Activated CD4-positive, alpha-beta T cell treated with anti-CD3 and anti-CD28 coated beads for 36 hours (primary cell): ENCODE measurements at regions of chr1 and their contacts with region 1.

Region 1: DNA sequence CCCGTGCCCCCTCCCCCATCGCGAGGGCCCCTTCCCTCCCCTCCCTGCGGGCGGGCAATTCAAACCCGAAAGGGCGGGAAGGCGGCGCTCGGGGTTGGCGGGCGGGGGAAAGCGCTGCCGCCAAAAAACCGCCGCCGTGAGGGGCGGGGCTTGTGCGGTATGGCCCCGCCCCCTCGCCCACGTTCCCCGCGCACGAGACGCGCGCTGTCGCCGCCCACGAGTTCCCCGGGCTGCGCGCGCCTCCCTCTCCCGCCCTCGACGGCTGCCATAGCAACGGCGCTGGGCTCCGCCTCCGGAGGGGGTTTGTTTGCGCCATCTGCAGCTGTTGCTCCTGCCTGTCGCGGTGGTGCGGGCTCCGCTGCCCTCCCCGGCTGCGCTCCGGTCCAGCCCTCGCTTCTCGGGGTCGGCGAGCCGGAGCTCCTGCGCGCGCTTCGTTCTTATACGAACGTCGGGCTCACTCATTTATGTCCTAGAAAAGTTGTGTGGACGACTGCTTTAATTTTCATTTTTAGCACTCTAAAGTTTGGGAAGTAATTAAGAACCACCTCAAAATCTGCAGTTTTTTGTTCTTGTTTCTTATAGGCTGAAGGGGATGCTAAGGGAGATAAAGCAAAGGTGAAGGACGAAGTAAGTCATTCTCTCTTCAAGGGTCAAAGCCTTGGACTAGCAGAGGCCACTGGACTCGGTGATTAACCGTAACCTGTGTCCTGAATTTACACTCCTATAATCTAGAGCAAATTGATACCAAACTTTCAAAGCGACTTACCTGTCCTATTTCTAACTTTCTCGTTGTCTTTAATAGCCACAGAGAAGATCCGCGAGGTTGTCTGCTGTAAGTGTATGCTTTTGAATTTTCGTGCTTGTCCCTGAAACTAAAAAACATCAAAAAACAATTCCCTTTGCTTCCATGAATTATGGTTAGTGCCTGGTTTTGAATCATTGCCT is 933 bp downstream of the HMGN2 start:
- DNase-seq: peak; percentile 97
- ATAC-seq: peak; percentile 62
- H3K4me3 Mint-ChIP-seq: peak overlapping the region; percentile 91
- H3K27ac Mint-ChIP-seq: peak overlapping the region; percentile 43
- H3K4me1 Mint-ChIP-seq: peaks cover 50% of the 10 kb centered on the region
- H3K27me3 Mint-ChIP-seq: no peaks in the 10 kb centered on the region

Region 2: GRCh38 chr1:26279456-26280332 is 193.5 kb before region 1 on chr1 and contains the start of gene SH3BGRL3:
- CTCF ChIA-PET with region 1: no interaction called
- POLR2A ChIA-PET with region 1: no interaction called
- intact Hi-C with region 1: loop called in 1 of 2 experiments (anchors 2 kb)
- DNase-seq: peak; percentile 92
- ATAC-seq: peak; percentile 56
- H3K4me3 Mint-ChIP-seq: peak within 1 kb of the TSS; percentile 78
- H3K27ac Mint-ChIP-seq: peak within 1 kb of the TSS; percentile 94
- H3K4me1 Mint-ChIP-seq: peaks cover 82% of the 10 kb centered on the region
- H3K27me3 Mint-ChIP-seq: no peaks in the 10 kb centered on the region
- total RNA-seq, gene SH3BGRL3: 267 to 381 TPM

Region 3: GRCh38 chr1:26408604-26409003 is 64.6 kb before region 1 on chr1:
- CTCF ChIA-PET with region 1: no interaction called
- POLR2A ChIA-PET with region 1: no interaction called
- intact Hi-C with region 1: no loop called
- DNase-seq: peak; percentile 85
- ATAC-seq: peak; percentile 87
- H3K4me3 Mint-ChIP-seq: no peak overlapping the region
- H3K27ac Mint-ChIP-seq: no peak overlapping the region
- H3K4me1 Mint-ChIP-seq: peaks cover 20% of the 10 kb centered on the region
- H3K27me3 Mint-ChIP-seq: peaks cover 39% of the 10 kb centered on the region

Region 4: DNA sequence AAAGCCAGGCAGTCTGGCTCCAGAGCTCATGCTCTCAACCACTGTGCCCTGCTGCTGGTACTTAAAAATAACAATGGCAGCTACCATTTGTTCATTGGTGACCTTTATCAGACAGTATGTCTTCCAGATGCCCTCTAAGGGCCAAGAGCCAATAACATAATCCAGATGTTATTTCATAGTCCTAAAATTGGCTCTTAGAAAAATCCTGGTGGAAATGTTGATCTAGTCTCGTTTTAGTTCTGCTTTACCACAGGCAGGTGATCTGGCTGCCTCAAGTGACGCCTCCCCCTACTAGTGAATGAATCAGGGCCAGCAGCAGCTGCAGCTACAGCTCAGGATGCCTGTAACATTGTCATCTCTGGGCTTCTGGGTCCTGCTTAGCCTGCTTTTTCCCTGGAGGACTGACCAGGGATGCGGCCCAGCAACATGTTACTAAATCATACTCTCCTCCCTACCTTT is 13.6 kb before region 1 on chr1:
- CTCF ChIA-PET with region 1: interaction called, 13 read pairs
- POLR2A ChIA-PET with region 1: no interaction called
- intact Hi-C with region 1: no loop called
- DNase-seq: no peak
- ATAC-seq: no peak
- H3K4me3 Mint-ChIP-seq: no peak overlapping the region
- H3K27ac Mint-ChIP-seq: no peak overlapping the region
- H3K4me1 Mint-ChIP-seq: no peaks in the 10 kb centered on the region
- H3K27me3 Mint-ChIP-seq: no peaks in the 10 kb centered on the region

Region 5: GRCh38 chr1:26826261-26827105 is 353.3 kb after region 1 on chr1 and contains the start of gene ZDHHC18:
- CTCF ChIA-PET with region 1: no interaction called
- POLR2A ChIA-PET with region 1: interaction called, 4 read pairs
- intact Hi-C with region 1: loop called in 1 of 2 experiments (anchors 2 kb)
- DNase-seq: peak; percentile 84
- ATAC-seq: peak; percentile 81
- H3K4me3 Mint-ChIP-seq: peak within 1 kb of the TSS; percentile 94
- H3K27ac Mint-ChIP-seq: peak within 1 kb of the TSS; percentile 93
- H3K4me1 Mint-ChIP-seq: peaks cover 52% of the 10 kb centered on the region
- H3K27me3 Mint-ChIP-seq: no peaks in the 10 kb centered on the region
- total RNA-seq, gene ZDHHC18: 51.6 to 66.0 TPM